Calu3 (cell line): ENCODE measurements at regions of chr15 and their contacts with region 1.

Region 1: DNA sequence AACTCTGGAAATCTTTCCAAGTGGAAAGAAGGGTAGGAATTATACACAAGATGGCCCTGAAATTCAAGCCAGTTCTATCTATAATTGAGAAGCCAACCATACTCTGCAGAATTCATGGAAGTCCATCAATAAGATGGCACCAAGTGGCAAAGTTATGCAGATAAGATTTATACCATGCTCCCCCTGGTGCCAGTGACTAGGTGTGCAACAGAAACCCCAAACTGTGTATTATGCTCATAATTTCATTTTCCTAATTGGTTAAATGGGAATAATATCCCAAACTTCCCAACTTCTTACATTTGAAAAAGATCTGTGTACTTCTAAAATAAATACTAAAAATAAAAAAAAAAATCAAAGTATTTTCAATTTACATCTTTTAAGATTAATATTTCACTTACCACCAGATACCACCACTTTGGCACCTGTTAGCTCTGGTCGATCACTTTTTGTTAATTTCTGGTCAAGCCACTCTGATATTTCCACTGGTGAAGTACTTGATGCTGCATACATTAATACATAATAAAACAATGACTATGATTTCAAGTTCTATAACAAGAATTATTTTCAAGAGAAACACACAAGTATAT is 25.9 kb downstream of the ETFA start:
- DNase-seq: peak; percentile 32
- H3K4me3 Mint-ChIP-seq: no peak overlapping the region
- H3K27ac Mint-ChIP-seq: no peak overlapping the region
- H3K4me1 Mint-ChIP-seq: no peaks in the 10 kb centered on the region
- H3K27me3 Mint-ChIP-seq: no peaks in the 10 kb centered on the region
- CTCF ChIP-seq: peak; percentile 62

Region 2: GRCh38 chr15:76190834-76191538 is 94.3 kb before region 1 on chr15:
- CTCF ChIA-PET with region 1: interaction called, 5 read pairs
- intact Hi-C with region 1: loop called (anchors 1 kb)
- DNase-seq: peak; percentile 88
- H3K4me3 Mint-ChIP-seq: peak overlapping the region; percentile 39
- H3K27ac Mint-ChIP-seq: peak overlapping the region; percentile 10
- H3K4me1 Mint-ChIP-seq: peaks cover 19% of the 10 kb centered on the region
- H3K27me3 Mint-ChIP-seq: peaks cover 23% of the 10 kb centered on the region
- CTCF ChIP-seq: peak; percentile 87

Region 3: DNA sequence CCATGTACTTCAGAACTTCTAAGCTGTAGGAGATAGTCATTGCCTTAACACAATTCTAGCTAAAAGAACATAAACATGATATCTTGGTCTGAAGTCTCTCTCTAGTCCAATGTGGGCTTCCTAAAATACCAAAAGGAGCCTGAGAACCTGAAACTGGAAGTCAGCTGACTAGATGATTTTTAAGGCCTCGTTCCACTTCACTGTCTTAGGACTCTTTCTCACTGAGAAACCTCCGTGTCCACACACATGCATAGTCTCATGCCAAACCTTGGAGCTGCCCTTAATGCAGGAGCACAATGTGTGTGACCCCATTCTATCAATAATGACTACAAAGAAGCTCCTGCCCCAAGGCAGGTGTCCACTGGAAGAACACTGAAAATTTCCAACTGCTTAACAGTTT is 61.8 kb before region 1 on chr15:
- CTCF ChIA-PET with region 1: no interaction called
- intact Hi-C with region 1: no loop called
- DNase-seq: no peak
- H3K4me3 Mint-ChIP-seq: no peak overlapping the region
- H3K27ac Mint-ChIP-seq: no peak overlapping the region
- H3K4me1 Mint-ChIP-seq: peaks cover 8% of the 10 kb centered on the region
- H3K27me3 Mint-ChIP-seq: no peaks in the 10 kb centered on the region
- CTCF ChIP-seq: no peak

Region 4: GRCh38 chr15:76235186-76235826 is 50.0 kb before region 1 on chr15:
- CTCF ChIA-PET with region 1: no interaction called
- intact Hi-C with region 1: loop called (anchors 5 kb)
- DNase-seq: no peak
- H3K4me3 Mint-ChIP-seq: no peak overlapping the region
- H3K27ac Mint-ChIP-seq: no peak overlapping the region
- H3K4me1 Mint-ChIP-seq: no peaks in the 10 kb centered on the region
- H3K27me3 Mint-ChIP-seq: no peaks in the 10 kb centered on the region
- CTCF ChIP-seq: peak; percentile 9

Region 5: DNA sequence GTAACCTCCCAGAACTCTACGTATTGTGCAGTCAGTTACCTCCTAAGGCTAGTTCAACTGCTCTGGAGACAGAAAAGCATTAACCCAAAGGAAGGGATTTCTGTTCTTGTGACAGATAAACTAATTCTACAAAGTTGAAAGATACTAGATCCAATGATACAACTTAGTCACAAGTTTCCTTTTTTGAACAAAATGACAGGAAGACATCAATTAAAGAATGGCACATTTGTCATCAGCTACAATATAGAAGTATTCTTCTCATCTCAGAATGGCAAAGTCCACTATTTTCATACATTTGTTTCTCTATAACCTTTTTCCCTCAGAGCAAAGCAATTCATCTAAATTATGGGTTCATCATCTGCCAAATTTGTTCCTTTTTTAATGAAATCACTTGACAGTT is 94.9 kb after region 1 on chr15:
- CTCF ChIA-PET with region 1: no interaction called
- intact Hi-C with region 1: no loop called
- DNase-seq: no peak
- H3K4me3 Mint-ChIP-seq: no peak overlapping the region
- H3K27ac Mint-ChIP-seq: no peak overlapping the region
- H3K4me1 Mint-ChIP-seq: no peaks in the 10 kb centered on the region
- H3K27me3 Mint-ChIP-seq: no peaks in the 10 kb centered on the region
- CTCF ChIP-seq: no peak